Caco-2 (cell line): ENCODE measurements at regions of chr7 and their contacts with region 1.

Region 1: DNA sequence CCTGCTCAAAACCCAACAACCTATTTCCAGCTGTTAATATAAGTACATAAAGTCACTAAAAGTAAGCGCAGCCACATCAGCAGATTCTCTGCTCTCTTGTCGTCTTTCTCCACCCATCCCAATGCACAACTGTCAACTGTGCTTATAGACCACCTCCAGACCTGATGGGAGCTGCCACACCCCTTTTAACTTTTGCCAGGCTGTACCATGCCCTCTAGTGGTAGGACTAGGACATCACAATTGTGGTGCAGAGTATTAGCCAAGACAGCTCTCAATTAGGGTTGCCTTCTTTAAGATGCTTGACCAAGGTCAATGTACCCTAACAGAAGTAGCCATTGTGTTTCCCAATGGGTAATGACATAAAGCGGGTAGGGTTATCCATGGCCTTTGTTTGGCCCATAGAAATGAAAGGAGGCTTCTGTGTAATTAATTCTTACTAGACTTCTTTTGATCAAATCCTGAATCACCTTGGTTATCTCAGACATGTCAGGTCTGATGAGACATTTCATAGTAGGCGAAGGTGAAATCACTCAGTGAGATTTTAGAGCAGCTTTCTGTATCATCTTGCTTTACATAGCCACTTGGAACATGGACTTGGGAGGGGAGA is 68.1 kb downstream of the SCRN1 start:
- DNase-seq: peak; percentile 66 to 75
- H3K4me3 ChIP-seq: no peak overlapping the region
- H3K4me3 Mint-ChIP-seq: no peak overlapping the region
- H3K27ac Mint-ChIP-seq: no peak overlapping the region
- H3K4me1 ChIP-seq: no peaks in the 10 kb centered on the region
- H3K4me1 Mint-ChIP-seq: no peaks in the 10 kb centered on the region
- H3K27me3 ChIP-seq: no peaks in the 10 kb centered on the region
- H3K27me3 Mint-ChIP-seq: no peaks in the 10 kb centered on the region
- CTCF ChIP-seq: peak; percentile 84 to 87

Region 2: DNA sequence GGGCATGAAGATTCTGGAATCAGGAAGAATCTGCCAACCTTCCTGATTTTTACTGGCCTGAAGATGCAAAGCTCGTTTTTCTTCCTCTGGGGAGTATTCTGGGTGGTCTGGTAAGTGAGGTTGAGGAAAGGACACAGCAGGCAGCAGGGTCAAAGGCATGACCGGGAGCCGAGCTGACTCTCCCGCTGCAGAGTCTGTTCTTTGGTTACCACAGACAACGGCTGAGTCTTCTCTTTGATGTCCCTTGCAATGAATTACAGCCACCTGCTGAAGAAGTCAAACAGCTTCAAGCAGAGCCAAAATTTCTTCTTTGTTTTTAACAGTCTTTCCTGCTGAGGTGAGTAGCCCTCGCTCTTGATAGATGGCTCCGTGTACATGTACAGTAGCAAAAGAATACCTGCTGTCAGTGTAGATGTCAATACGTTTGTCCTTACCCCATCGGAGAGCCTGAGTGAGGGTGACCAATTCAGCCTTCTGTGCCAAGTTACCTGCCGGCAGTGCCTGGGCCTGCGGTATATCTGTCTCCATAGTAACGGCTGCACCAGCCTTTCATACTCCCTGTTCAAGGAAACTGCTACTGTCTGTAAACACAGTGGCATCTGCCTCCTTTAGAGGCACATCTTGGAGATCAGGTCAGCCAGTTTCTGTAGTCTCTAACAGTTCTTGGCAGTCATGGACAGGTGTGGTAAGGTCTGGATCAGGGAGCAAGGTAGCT is 281.5 kb before region 1 on chr7:
- CTCF ChIA-PET with region 1: interaction called, 9 read pairs
- POLR2A ChIA-PET with region 1: no interaction called
- intact Hi-C with region 1: loop called (anchors 2 kb)
- DNase-seq: no peak
- H3K4me3 ChIP-seq: no peak overlapping the region
- H3K4me3 Mint-ChIP-seq: no peak overlapping the region
- H3K27ac Mint-ChIP-seq: no peak overlapping the region
- H3K4me1 ChIP-seq: no peaks in the 10 kb centered on the region
- H3K4me1 Mint-ChIP-seq: no peaks in the 10 kb centered on the region
- H3K27me3 ChIP-seq: no peaks in the 10 kb centered on the region
- H3K27me3 Mint-ChIP-seq: no peaks in the 10 kb centered on the region
- CTCF ChIP-seq: no peak

Region 3: GRCh38 chr7:29748286-29749108 is 173.0 kb before region 1 on chr7:
- CTCF ChIA-PET with region 1: interaction called, 20 read pairs
- POLR2A ChIA-PET with region 1: no interaction called
- intact Hi-C with region 1: loop called (anchors 1 kb)
- DNase-seq: peak in 1 of 2 experiments; percentile 29
- H3K4me3 ChIP-seq: no peak overlapping the region
- H3K4me3 Mint-ChIP-seq: no peak overlapping the region
- H3K27ac Mint-ChIP-seq: no peak overlapping the region
- H3K4me1 ChIP-seq: no peaks in the 10 kb centered on the region
- H3K4me1 Mint-ChIP-seq: peaks cover 7% of the 10 kb centered on the region
- H3K27me3 ChIP-seq: no peaks in the 10 kb centered on the region; the same call in 1 of the 2 replicates
- H3K27me3 Mint-ChIP-seq: peaks cover 20% of the 10 kb centered on the region
- CTCF ChIP-seq: peak; percentile 62 to 64

Region 4: GRCh38 chr7:29764227-29764626 is 157.3 kb before region 1 on chr7:
- CTCF ChIA-PET with region 1: interaction called, 11 read pairs
- POLR2A ChIA-PET with region 1: no interaction called
- intact Hi-C with region 1: loop called (anchors 5 kb)
- DNase-seq: peak; percentile 47 to 49
- H3K4me3 ChIP-seq: no peak overlapping the region
- H3K4me3 Mint-ChIP-seq: no peak overlapping the region
- H3K27ac Mint-ChIP-seq: no peak overlapping the region
- H3K4me1 ChIP-seq: no peaks in the 10 kb centered on the region
- H3K4me1 Mint-ChIP-seq: peaks cover 13% of the 10 kb centered on the region
- H3K27me3 ChIP-seq: no peaks in the 10 kb centered on the region
- H3K27me3 Mint-ChIP-seq: peaks cover 4% of the 10 kb centered on the region
- CTCF ChIP-seq: peak in 1 of 2 experiments; percentile 49

Region 5: GRCh38 chr7:29839302-29839701 is 82.2 kb before region 1 on chr7:
- CTCF ChIA-PET with region 1: no interaction called
- POLR2A ChIA-PET with region 1: no interaction called
- intact Hi-C with region 1: no loop called
- DNase-seq: no peak
- H3K4me3 ChIP-seq: no peak overlapping the region
- H3K4me3 Mint-ChIP-seq: no peak overlapping the region
- H3K27ac Mint-ChIP-seq: no peak overlapping the region
- H3K4me1 ChIP-seq: no peaks in the 10 kb centered on the region
- H3K4me1 Mint-ChIP-seq: no peaks in the 10 kb centered on the region
- H3K27me3 ChIP-seq: no peaks in the 10 kb centered on the region; the same call in 1 of the 2 replicates
- H3K27me3 Mint-ChIP-seq: no peaks in the 10 kb centered on the region
- CTCF ChIP-seq: no peak

Region 6: DNA sequence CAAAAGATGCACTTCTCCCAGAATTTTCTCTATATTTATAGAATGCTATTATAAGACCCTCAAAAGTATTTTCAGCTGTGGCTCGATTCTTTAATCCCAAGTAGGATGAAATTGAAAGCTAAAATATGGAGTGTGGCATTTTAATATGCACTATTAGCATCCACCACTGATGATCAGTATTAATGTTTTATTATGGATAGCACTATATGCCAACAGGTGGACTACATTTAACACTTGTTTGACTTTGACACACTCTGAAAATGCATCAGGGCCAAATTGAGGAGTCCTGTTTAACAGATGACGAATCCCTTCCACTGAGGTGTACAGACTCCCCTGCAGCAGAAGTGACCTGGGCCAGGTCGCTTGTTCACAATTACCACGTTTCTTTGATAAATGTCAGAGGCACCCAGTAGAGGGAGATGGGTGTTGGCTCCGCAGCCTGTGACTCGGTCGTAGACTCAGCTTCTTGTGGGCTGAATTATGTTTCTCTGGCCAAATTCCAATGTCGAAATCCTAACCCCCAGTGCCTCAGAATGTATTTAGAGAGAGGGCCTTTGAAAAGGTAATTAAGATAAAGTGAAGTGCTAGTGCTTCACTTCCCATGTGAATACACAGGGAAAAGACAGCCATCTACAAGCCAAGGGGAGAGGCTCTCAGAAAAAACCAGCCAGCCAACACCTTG is 67.1 kb before region 1 on chr7:
- CTCF ChIA-PET with region 1: interaction called, 10 read pairs
- POLR2A ChIA-PET with region 1: no interaction called
- intact Hi-C with region 1: loop called (anchors 1 kb)
- DNase-seq: peak; percentile 80 to 84
- H3K4me3 ChIP-seq: no peak overlapping the region
- H3K4me3 Mint-ChIP-seq: no peak overlapping the region
- H3K27ac Mint-ChIP-seq: no peak overlapping the region
- H3K4me1 ChIP-seq: peaks cover 7% of the 10 kb centered on the region
- H3K4me1 Mint-ChIP-seq: peaks cover 19% of the 10 kb centered on the region
- H3K27me3 ChIP-seq: no peaks in the 10 kb centered on the region
- H3K27me3 Mint-ChIP-seq: no peaks in the 10 kb centered on the region
- CTCF ChIP-seq: peak; percentile 56 to 58

Region 7: GRCh38 chr7:29878081-29878688 is 43.3 kb before region 1 on chr7:
- CTCF ChIA-PET with region 1: interaction called, 16 read pairs
- POLR2A ChIA-PET with region 1: no interaction called
- intact Hi-C with region 1: loop called (anchors 1 kb)
- DNase-seq: peak in 1 of 2 experiments; percentile 26
- H3K4me3 ChIP-seq: no peak overlapping the region
- H3K4me3 Mint-ChIP-seq: no peak overlapping the region
- H3K27ac Mint-ChIP-seq: no peak overlapping the region
- H3K4me1 ChIP-seq: no peaks in the 10 kb centered on the region
- H3K4me1 Mint-ChIP-seq: no peaks in the 10 kb centered on the region
- H3K27me3 ChIP-seq: no peaks in the 10 kb centered on the region; the same call in 1 of the 2 replicates
- H3K27me3 Mint-ChIP-seq: peaks cover 6% of the 10 kb centered on the region
- CTCF ChIP-seq: peak; percentile 57 to 58

Region 8: GRCh38 chr7:29946428-29947186 is 25.1 kb after region 1 on chr7:
- CTCF ChIA-PET with region 1: no interaction called
- POLR2A ChIA-PET with region 1: no interaction called
- intact Hi-C with region 1: no loop called
- DNase-seq: peak in 1 of 2 experiments; percentile 22
- H3K4me3 ChIP-seq: no peak overlapping the region
- H3K4me3 Mint-ChIP-seq: no peak overlapping the region
- H3K27ac Mint-ChIP-seq: no peak overlapping the region
- H3K4me1 ChIP-seq: no peaks in the 10 kb centered on the region
- H3K4me1 Mint-ChIP-seq: no peaks in the 10 kb centered on the region
- H3K27me3 ChIP-seq: no peaks in the 10 kb centered on the region
- H3K27me3 Mint-ChIP-seq: no peaks in the 10 kb centered on the region
- CTCF ChIP-seq: peak; percentile 23 to 44

Region 9: DNA sequence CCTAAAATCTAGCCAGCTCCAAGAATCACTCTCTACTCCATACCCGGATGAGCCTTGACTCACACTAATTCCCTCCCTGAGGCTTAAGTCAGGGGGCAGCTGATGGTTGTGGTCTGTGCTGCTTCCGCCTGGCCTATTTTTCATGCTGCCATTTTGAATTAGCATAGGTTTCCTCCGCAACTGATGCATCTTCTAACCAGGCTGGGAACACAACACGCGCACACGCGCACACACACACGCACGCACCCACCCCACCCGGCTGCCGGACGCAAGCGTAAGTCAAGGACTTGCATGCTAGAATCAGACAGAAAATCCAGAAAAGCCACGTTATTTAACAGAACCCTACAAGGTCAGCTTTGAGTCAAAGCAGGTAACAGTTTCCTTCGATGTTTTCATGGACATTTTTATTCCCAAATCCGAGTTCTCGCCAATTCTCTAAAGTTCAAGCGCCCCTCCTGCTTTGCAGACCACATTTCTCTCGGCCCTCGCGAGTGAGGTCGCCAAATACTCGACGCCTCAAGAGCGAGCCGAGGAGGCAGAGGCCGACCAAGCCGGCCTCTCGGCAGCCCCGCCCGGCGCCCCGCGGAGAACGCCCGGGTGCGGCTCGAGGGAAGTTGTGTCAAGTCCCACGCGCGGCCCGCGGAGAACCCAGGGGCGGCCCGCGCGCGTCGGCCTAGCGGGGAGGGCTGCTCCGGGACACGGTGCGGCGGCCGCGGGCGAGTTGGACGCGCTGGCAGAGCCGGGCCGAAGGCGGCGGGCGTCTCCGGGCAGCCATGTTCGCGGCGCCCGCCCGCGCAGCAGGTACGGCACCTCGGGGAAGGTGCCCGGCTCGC is 67.1 kb after region 1 on chr7:
- CTCF ChIA-PET with region 1: no interaction called
- POLR2A ChIA-PET with region 1: no interaction called
- intact Hi-C with region 1: no loop called
- DNase-seq: peak; percentile 55 to 68
- H3K4me3 ChIP-seq: peak overlapping the region; percentile 100
- H3K4me3 Mint-ChIP-seq: peak overlapping the region; percentile 79
- H3K27ac Mint-ChIP-seq: peak overlapping the region; percentile 88
- H3K4me1 ChIP-seq: peaks cover 14% of the 10 kb centered on the region
- H3K4me1 Mint-ChIP-seq: peaks cover 39% of the 10 kb centered on the region
- H3K27me3 ChIP-seq: no peaks in the 10 kb centered on the region
- H3K27me3 Mint-ChIP-seq: no peaks in the 10 kb centered on the region
- CTCF ChIP-seq: no peak

Region 10: GRCh38 chr7:30134611-30135545 is 213.4 kb after region 1 on chr7 and contains the start of gene MTURN:
- CTCF ChIA-PET with region 1: no interaction called
- POLR2A ChIA-PET with region 1: no interaction called
- intact Hi-C with region 1: no loop called
- DNase-seq: peak; percentile 92 to 93
- H3K4me3 ChIP-seq: peak within 1 kb of the TSS; percentile 86
- H3K4me3 Mint-ChIP-seq: peak within 1 kb of the TSS; percentile 79
- H3K27ac Mint-ChIP-seq: peak within 1 kb of the TSS; percentile 60
- H3K4me1 ChIP-seq: no peaks in the 10 kb centered on the region
- H3K4me1 Mint-ChIP-seq: no peaks in the 10 kb centered on the region
- H3K27me3 ChIP-seq: no peaks in the 10 kb centered on the region; the same call in 1 of the 2 replicates
- H3K27me3 Mint-ChIP-seq: peaks cover 3% of the 10 kb centered on the region
- CTCF ChIP-seq: no peak
- total RNA-seq, gene MTURN: 2.2 and 2.3 TPM in 2 replicates